Endothelial cell of umbilical vein (primary cell): ENCODE measurements at regions of chr1 and their contacts with region 1.

Region 1: GRCh38 chr1:92831762-92832536 is at the start of gene RPL5:
- DNase-seq: peak; percentile 99
- H3K4me3 ChIP-seq: peak within 1 kb of the TSS; percentile 85 to 97 (median 85)
- H3K27ac ChIP-seq: peak within 1 kb of the TSS; percentile 73
- H3K4me1 ChIP-seq: peaks cover 26% of the 10 kb centered on the region
- H3K27me3 ChIP-seq: no peaks in the 10 kb centered on the region
- CTCF ChIP-seq: peak; percentile 97 to 98
- POLR2A ChIP-seq: peak; percentile 99
- total RNA-seq, gene RPL5: 1,109 and 1,117 TPM in 2 replicates

Region 2: GRCh38 chr1:92502247-92502646 is 329.7 kb before region 1 on chr1:
- CTCF ChIA-PET with region 1: no interaction called
- POLR2A ChIA-PET with region 1: interaction called, 11 read pairs
- dilution Hi-C with region 1: no loop called
- intact Hi-C with region 1: no loop called
- DNase-seq: no peak
- H3K4me3 ChIP-seq: no peak overlapping the region
- H3K27ac ChIP-seq: no peak overlapping the region
- H3K4me1 ChIP-seq: no peaks in the 10 kb centered on the region
- H3K27me3 ChIP-seq: no peaks in the 10 kb centered on the region
- CTCF ChIP-seq: no peak
- POLR2A ChIP-seq: no peak

Region 3: GRCh38 chr1:92784639-92785500 is 47.1 kb before region 1 on chr1 and contains the start of gene EVI5:
- CTCF ChIA-PET with region 1: interaction called, 9 read pairs
- POLR2A ChIA-PET with region 1: interaction called, 6 read pairs
- dilution Hi-C with region 1: no loop called
- intact Hi-C with region 1: loop called (anchors 1 kb)
- DNase-seq: peak; percentile 99
- H3K4me3 ChIP-seq: peak within 1 kb of the TSS; percentile 73 to 88 (median 77)
- H3K27ac ChIP-seq: peak within 1 kb of the TSS; percentile 97
- H3K4me1 ChIP-seq: peaks cover 3% of the 10 kb centered on the region
- H3K27me3 ChIP-seq: no peaks in the 10 kb centered on the region
- CTCF ChIP-seq: no peak
- POLR2A ChIP-seq: peak; percentile 78
- total RNA-seq, gene EVI5: 26.2 and 34.4 TPM in 2 replicates

Region 4: DNA sequence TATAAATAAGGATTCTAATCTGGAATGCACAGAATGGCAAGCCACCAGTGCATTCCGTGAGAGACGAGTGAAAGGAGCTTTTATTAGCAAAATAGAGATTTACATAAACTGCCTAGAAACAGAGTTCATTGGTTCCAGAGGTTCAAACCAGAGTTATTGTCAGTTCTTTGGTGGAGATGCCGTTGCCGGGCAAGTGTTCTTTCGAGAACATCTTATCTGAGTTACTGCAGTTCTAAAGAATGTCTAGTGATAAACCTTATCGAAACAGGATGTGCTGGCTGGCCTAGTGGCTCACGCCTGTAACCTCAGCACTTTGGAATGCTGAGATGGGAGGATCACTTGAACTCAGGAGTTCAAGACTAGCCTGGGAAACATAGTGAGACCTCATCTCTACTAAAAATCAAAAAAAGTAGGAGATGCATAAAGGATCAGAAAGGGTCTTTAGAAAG is 27.2 kb before region 1 on chr1:
- CTCF ChIA-PET with region 1: interaction called, 7 read pairs
- POLR2A ChIA-PET with region 1: interaction called, 3 read pairs
- dilution Hi-C with region 1: no loop called
- intact Hi-C with region 1: loop called (anchors 2 kb)
- DNase-seq: peak; percentile 97
- H3K4me3 ChIP-seq: no peak overlapping the region
- H3K27ac ChIP-seq: peak overlapping the region; percentile 94
- H3K4me1 ChIP-seq: peaks cover 15% of the 10 kb centered on the region
- H3K27me3 ChIP-seq: no peaks in the 10 kb centered on the region
- CTCF ChIP-seq: no peak
- POLR2A ChIP-seq: peak; percentile 55

Region 5: DNA sequence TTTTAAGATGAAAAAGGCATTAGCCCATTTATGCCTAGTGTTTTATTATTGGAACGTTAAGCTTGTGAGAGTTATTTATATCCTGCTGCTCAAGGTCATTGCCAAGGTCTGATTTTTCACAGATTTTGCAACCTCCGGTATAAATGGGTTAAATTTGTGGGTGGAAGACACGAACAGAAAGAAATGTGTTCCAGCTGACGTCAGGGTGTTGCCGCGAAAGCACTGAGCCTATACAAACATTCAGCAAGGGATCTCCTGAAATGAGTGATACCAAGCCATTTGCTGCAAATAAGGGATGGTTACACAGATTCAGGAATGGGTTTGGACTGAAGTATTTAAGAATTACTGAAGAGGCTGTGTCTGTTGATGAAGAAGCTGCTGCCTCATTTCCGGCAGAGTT is 316.1 kb after region 1 on chr1:
- CTCF ChIA-PET with region 1: no interaction called
- POLR2A ChIA-PET with region 1: no interaction called
- dilution Hi-C with region 1: no loop called
- intact Hi-C with region 1: no loop called
- DNase-seq: no peak
- H3K4me3 ChIP-seq: no peak overlapping the region
- H3K27ac ChIP-seq: no peak overlapping the region
- H3K4me1 ChIP-seq: no peaks in the 10 kb centered on the region
- H3K27me3 ChIP-seq: no peaks in the 10 kb centered on the region
- CTCF ChIP-seq: no peak
- POLR2A ChIP-seq: no peak